Caco-2 (cell line): ENCODE measurements at regions of chr11 and their contacts with region 1.

Region 1: GRCh38 chr11:15852179-15852578 is 504.2 kb downstream of the SOX6 start:
- DNase-seq: peak in 1 of 2 experiments; percentile 32
- H3K4me3 ChIP-seq: no peak overlapping the region
- H3K4me3 Mint-ChIP-seq: no peak overlapping the region
- H3K27ac Mint-ChIP-seq: no peak overlapping the region
- H3K4me1 ChIP-seq: no peaks in the 10 kb centered on the region; the same call in 1 of the 2 replicates
- H3K4me1 Mint-ChIP-seq: peaks cover 6% of the 10 kb centered on the region
- H3K27me3 ChIP-seq: no peaks in the 10 kb centered on the region
- H3K27me3 Mint-ChIP-seq: peaks cover 2% of the 10 kb centered on the region
- CTCF ChIP-seq: peak; percentile 48 to 64

Region 2: GRCh38 chr11:15878756-15879155 is 26.6 kb after region 1 on chr11:
- CTCF ChIA-PET with region 1: no interaction called
- POLR2A ChIA-PET with region 1: no interaction called
- intact Hi-C with region 1: no loop called
- DNase-seq: no peak
- H3K4me3 ChIP-seq: no peak overlapping the region
- H3K4me3 Mint-ChIP-seq: no peak overlapping the region
- H3K27ac Mint-ChIP-seq: no peak overlapping the region
- H3K4me1 ChIP-seq: no peaks in the 10 kb centered on the region
- H3K4me1 Mint-ChIP-seq: no peaks in the 10 kb centered on the region
- H3K27me3 ChIP-seq: no peaks in the 10 kb centered on the region
- H3K27me3 Mint-ChIP-seq: no peaks in the 10 kb centered on the region
- CTCF ChIP-seq: no peak

Region 3: DNA sequence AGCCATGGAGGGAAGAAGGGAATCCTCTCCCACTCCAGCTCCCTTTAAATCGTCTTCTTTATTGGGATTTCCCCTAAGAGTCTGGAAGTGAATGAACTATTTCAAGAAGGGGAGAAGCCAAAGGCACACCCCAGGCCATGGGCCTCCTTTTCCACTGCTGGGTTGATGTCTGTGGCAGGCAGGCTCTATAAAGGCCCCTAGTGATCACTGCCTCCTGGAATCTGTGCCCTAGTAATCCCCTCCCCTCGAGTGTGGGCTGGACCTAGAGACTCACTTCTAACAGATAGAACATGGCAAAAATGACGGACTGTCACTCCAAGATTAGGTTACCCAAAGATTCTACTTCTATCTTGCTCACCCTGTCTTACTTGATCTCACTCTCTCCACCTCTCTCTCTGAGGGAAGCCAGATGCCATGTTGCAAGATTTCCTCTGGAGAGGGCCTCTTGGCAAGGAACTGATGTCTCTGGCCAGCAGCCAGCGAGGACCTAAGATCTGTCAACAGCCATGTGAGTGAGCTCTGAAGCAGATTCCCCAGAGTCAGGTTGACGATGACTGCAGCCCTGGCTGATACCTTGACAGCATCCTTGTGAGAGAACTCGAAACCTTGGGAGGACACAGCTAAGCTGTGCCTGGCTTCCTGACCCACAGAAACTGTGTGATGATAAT is 59.3 kb after region 1 on chr11:
- CTCF ChIA-PET with region 1: no interaction called
- POLR2A ChIA-PET with region 1: no interaction called
- intact Hi-C with region 1: loop called (anchors 5 kb)
- DNase-seq: peak in 1 of 2 experiments; percentile 16
- H3K4me3 ChIP-seq: no peak overlapping the region
- H3K4me3 Mint-ChIP-seq: no peak overlapping the region
- H3K27ac Mint-ChIP-seq: no peak overlapping the region
- H3K4me1 ChIP-seq: no peaks in the 10 kb centered on the region
- H3K4me1 Mint-ChIP-seq: no peaks in the 10 kb centered on the region
- H3K27me3 ChIP-seq: no peaks in the 10 kb centered on the region
- H3K27me3 Mint-ChIP-seq: no peaks in the 10 kb centered on the region
- CTCF ChIP-seq: no peak

Region 4: GRCh38 chr11:15923183-15923582 is 71.0 kb after region 1 on chr11:
- CTCF ChIA-PET with region 1: interaction called, 13 read pairs
- POLR2A ChIA-PET with region 1: no interaction called
- intact Hi-C with region 1: no loop called
- DNase-seq: no peak
- H3K4me3 ChIP-seq: no peak overlapping the region
- H3K4me3 Mint-ChIP-seq: no peak overlapping the region
- H3K27ac Mint-ChIP-seq: no peak overlapping the region
- H3K4me1 ChIP-seq: no peaks in the 10 kb centered on the region
- H3K4me1 Mint-ChIP-seq: no peaks in the 10 kb centered on the region
- H3K27me3 ChIP-seq: no peaks in the 10 kb centered on the region
- H3K27me3 Mint-ChIP-seq: no peaks in the 10 kb centered on the region
- CTCF ChIP-seq: peak in 1 of 2 experiments; percentile 4

Region 5: DNA sequence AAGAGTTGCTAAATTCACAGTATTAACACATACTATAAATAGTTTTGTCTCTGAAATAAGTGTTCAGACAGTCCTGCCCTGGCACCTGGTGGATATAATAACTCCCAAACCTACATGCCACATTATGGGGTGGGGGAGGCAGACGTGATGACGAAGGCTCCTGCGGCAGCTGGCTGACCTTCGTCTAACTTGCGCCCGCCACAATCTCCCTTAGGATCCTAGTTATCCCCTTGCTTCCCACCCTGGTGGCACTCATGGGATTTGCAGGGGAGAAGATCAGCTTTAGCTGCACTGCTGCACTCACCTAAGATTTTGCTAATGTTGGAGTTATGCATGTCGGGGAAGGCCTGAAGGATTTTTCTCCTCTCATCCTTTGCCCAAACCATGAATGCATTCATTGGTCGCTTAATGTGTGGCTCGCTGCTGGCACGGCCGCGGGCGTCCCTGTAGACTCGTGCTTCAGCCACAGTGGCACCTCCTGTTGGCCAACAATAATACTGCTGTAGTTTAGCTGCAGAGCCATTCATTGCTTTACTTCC is 136.6 kb after region 1 on chr11:
- CTCF ChIA-PET with region 1: no interaction called
- POLR2A ChIA-PET with region 1: no interaction called
- intact Hi-C with region 1: loop called (anchors 10 kb)
- DNase-seq: no peak
- H3K4me3 ChIP-seq: no peak overlapping the region
- H3K4me3 Mint-ChIP-seq: no peak overlapping the region
- H3K27ac Mint-ChIP-seq: no peak overlapping the region
- H3K4me1 ChIP-seq: no peaks in the 10 kb centered on the region
- H3K4me1 Mint-ChIP-seq: no peaks in the 10 kb centered on the region
- H3K27me3 ChIP-seq: no peaks in the 10 kb centered on the region
- H3K27me3 Mint-ChIP-seq: no peaks in the 10 kb centered on the region
- CTCF ChIP-seq: peak in 1 of 2 experiments; percentile 3

Region 6: GRCh38 chr11:16070573-16070972 is 218.4 kb after region 1 on chr11:
- CTCF ChIA-PET with region 1: no interaction called
- POLR2A ChIA-PET with region 1: no interaction called
- intact Hi-C with region 1: no loop called
- DNase-seq: peak in 1 of 2 experiments; percentile 2
- H3K4me3 ChIP-seq: no peak overlapping the region
- H3K4me3 Mint-ChIP-seq: no peak overlapping the region
- H3K27ac Mint-ChIP-seq: no peak overlapping the region
- H3K4me1 ChIP-seq: no peaks in the 10 kb centered on the region
- H3K4me1 Mint-ChIP-seq: no peaks in the 10 kb centered on the region
- H3K27me3 ChIP-seq: no peaks in the 10 kb centered on the region
- H3K27me3 Mint-ChIP-seq: no peaks in the 10 kb centered on the region
- CTCF ChIP-seq: peak in 1 of 2 experiments; percentile 9